Activated CD4-positive, alpha-beta T cell treated with anti-CD3 and anti-CD28 coated beads, Interleukin-2, amount 10 ng/mL, durations not matched to agents 24 days and 14 days (primary cell): ENCODE measurements at regions of chr16 and their contacts with region 1.

Region 1: GRCh38 chr16:89217388-89218191 is at the start of gene ZNF778:
- DNase-seq: peak; percentile 96
- H3K4me3 Mint-ChIP-seq: peak within 1 kb of the TSS; percentile 92
- H3K27ac Mint-ChIP-seq: peak within 1 kb of the TSS; percentile 40
- H3K4me1 Mint-ChIP-seq: peaks cover 16% of the 10 kb centered on the region
- H3K27me3 Mint-ChIP-seq: peaks cover 2% of the 10 kb centered on the region
- total RNA-seq, gene ZNF778: 6.0 and 9.8 TPM in 2 replicates

Region 2: DNA sequence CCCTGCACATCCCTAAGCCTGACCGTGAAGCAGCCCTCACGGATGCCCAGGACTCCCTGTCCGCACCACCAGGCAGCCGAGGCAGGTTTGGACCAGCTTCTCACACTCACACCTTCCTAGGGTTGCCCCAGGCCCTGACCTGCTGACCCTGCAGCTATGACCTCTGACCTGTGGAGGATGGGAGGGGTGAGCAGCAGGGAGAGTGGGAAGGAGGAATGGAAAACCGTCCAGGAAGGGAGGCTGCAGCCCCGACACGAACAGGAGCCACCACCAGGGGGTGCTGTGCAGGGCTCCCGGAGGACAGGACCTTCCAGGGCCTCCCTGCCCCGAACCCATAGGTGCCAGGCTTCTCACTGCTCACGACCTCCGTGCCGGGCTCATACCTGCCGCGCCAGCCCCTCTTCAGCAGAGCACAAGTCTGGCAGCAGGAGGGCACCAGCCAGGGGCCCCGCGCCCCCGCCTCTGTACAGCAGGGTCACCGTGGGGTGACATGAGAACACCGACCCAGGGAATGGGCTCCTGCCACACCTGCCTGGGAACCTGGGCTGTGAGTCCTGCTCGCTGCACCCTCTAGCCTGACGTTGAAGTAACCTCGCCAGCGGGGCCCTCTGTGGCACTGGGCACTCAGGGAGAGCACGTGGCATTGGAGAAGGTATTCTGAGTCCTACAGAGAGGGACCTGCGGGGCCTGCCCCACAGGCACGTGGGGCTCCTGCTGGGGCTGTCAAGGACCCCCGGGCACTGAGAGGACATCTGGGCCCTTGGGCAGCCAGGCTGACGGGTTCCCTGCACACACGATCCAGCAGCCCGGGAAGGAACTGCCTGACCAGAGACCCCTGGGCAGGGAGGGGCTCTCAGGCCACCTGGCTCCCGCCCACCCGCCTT is 473.7 kb before region 1 on chr16:
- intact Hi-C with region 1: loop called (anchors 5 kb)
- DNase-seq: peak; percentile 91
- H3K4me3 Mint-ChIP-seq: no peak overlapping the region
- H3K27ac Mint-ChIP-seq: no peak overlapping the region
- H3K4me1 Mint-ChIP-seq: peaks cover 23% of the 10 kb centered on the region
- H3K27me3 Mint-ChIP-seq: no peaks in the 10 kb centered on the region

Region 3: DNA sequence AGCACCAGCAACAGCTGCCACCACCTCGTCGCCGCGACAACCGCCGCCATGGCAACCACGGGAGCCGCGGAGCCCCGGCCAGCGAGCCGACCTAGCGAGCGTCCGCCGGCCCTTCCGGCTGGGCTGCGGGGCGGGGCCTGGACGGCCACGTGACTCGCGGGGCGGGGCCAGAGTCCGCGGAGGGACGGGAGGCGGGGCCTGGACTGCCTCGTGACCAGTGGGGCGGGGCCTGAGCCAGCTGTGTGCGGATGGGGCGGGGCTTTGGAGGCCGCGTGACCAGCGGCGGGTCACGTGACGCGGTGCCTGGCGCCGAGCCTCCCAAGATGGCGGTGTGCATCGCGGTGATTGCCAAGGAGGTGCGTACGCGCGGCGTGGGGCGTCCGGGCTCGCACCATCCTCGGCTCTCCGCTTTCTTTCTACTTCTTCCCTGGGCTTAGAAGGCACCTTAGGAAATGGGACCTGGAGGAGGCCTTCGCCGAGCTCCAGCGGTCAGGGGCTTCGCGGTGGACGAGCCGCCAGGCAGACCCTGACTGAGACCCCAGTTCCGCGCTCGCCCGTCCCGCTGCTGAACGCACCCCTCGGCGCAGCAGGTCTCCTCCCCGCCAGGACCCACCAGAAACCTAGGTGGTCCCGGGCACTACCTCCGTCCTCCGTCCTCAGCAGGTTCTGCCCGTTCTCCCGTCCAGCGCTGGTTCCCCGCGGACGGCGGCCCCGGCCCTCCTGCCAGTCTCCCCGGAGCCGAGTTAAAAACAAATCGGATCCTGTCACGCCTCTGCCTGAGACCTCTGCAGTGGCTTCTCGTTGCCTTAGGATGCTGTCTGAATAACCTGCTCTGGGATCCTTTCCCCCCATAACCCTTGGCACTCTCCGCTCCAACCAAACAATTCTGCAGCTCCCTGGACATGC is 360.5 kb before region 1 on chr16 and contains the starts of genes GALNS and TRAPPC2L:
- intact Hi-C with region 1: loop called (anchors 1 kb)
- DNase-seq: peak; percentile 100
- H3K4me3 Mint-ChIP-seq: peak within 1 kb of the TSS; percentile 99
- H3K27ac Mint-ChIP-seq: peak within 1 kb of the TSS; percentile 94
- H3K4me1 Mint-ChIP-seq: peaks cover 19% of the 10 kb centered on the region
- H3K27me3 Mint-ChIP-seq: no peaks in the 10 kb centered on the region
- total RNA-seq, gene GALNS: 23.2 and 23.4 TPM in 2 replicates
- total RNA-seq, gene TRAPPC2L: 62.1 and 67.1 TPM in 2 replicates

Region 4: GRCh38 chr16:88925101-88925887 is 292.3 kb before region 1 on chr16:
- intact Hi-C with region 1: no loop called
- DNase-seq: no peak
- H3K4me3 Mint-ChIP-seq: no peak overlapping the region
- H3K27ac Mint-ChIP-seq: no peak overlapping the region
- H3K4me1 Mint-ChIP-seq: peaks cover 4% of the 10 kb centered on the region
- H3K27me3 Mint-ChIP-seq: no peaks in the 10 kb centered on the region

Region 5: GRCh38 chr16:88948781-88949490 is 268.7 kb before region 1 on chr16:
- intact Hi-C with region 1: no loop called
- DNase-seq: no peak
- H3K4me3 Mint-ChIP-seq: no peak overlapping the region
- H3K27ac Mint-ChIP-seq: no peak overlapping the region
- H3K4me1 Mint-ChIP-seq: no peaks in the 10 kb centered on the region
- H3K27me3 Mint-ChIP-seq: peaks cover 16% of the 10 kb centered on the region

Region 6: DNA sequence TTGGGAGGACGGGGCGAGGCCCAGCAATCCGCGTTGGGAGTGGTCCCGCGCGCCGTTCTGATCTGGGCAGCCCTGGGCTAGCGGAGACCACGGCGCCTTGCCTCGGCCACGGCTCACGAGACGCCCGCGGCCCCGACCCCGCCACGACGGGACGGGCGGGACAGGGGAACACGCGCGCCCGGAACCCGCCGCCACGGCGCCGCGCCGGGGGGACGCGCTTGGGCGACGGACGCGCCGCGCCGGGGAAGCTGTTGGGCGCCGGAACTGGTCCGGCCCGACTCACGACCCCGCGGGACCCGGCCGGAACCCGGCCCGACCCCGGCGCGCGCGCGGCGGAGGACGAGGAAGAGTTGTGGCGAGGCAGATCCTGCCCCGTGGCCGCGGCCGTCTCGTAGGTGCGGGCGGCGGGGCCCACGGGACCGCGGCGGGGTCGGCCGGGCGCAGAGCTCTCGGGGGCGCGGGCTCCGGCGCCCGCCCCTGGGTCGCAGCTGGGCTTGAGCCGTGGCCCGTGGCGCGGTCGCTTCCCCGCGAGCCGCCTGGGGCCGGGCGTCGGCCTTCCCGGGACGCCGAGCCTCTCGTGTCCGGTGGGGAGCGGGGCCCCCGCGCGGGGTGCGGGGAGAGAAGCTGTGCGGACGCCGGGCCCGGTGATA is 123.9 kb before region 1 on chr16 and contains the start of gene ACSF3:
- intact Hi-C with region 1: loop called (anchors 10 kb)
- DNase-seq: peak; percentile 93
- H3K4me3 Mint-ChIP-seq: peak within 1 kb of the TSS; percentile 99
- H3K27ac Mint-ChIP-seq: peak within 1 kb of the TSS; percentile 95
- H3K4me1 Mint-ChIP-seq: peaks cover 44% of the 10 kb centered on the region
- H3K27me3 Mint-ChIP-seq: peaks cover 16% of the 10 kb centered on the region
- total RNA-seq, gene ACSF3: 41.1 and 41.6 TPM in 2 replicates

Region 7: DNA sequence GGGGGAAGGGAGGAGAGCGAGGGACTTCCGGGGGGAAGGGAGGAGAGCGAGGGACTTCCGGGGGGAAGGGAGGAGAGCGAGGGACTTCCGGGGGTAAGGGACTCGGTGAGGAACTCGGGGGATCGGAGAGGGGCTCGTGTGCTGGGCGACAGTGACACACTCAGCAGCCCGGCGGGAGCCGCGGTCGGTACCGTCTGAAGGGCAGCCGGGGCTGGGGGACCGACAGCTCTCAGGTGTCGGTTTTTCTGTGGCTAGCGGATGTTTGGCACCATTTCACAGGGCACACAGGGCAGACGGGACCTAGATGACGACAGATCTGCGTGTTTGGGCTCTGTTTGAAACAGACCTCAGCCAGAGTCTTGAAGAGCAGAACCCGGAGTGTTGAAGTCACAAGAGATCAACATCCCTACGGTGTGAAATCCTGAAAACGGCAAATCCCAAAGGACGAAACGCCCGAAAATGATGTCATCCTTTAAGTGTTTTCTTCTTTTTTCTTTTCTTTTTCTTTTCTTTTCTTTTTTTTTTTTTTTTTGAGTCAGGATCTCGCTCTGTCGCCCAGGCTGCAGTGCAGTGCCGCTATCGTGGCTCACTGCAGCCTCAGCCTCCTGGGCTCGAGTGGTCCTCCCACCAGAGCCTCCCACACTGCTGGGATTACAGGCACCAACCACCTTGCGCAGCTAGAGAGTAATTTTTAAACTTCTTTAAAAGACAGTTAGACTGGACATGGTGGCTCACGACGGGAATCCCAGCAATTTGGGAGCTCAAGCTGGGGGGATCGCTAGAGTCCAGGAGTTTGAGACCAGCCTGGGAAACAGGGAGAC is 23.8 kb after region 1 on chr16:
- intact Hi-C with region 1: loop called (anchors 1 kb)
- DNase-seq: peak; percentile 93
- H3K4me3 Mint-ChIP-seq: peak overlapping the region; percentile 100
- H3K27ac Mint-ChIP-seq: peak overlapping the region; percentile 100
- H3K4me1 Mint-ChIP-seq: peaks cover 15% of the 10 kb centered on the region
- H3K27me3 Mint-ChIP-seq: no peaks in the 10 kb centered on the region